ENCODE measurements at regions of chr12 and their contacts with region 1.

Region 1: GRCh38 chr12:53379389-53380103 is 430 bp upstream of the SP1 start:
- DNase-seq: peak; percentile 99
- H3K4me3 Mint-ChIP-seq: no peak overlapping the region
- H3K27ac Mint-ChIP-seq: no peak overlapping the region
- H3K4me1 Mint-ChIP-seq: peaks cover 37% of the 10 kb centered on the region
- H3K27me3 Mint-ChIP-seq: no peaks in the 10 kb centered on the region

Region 2: DNA sequence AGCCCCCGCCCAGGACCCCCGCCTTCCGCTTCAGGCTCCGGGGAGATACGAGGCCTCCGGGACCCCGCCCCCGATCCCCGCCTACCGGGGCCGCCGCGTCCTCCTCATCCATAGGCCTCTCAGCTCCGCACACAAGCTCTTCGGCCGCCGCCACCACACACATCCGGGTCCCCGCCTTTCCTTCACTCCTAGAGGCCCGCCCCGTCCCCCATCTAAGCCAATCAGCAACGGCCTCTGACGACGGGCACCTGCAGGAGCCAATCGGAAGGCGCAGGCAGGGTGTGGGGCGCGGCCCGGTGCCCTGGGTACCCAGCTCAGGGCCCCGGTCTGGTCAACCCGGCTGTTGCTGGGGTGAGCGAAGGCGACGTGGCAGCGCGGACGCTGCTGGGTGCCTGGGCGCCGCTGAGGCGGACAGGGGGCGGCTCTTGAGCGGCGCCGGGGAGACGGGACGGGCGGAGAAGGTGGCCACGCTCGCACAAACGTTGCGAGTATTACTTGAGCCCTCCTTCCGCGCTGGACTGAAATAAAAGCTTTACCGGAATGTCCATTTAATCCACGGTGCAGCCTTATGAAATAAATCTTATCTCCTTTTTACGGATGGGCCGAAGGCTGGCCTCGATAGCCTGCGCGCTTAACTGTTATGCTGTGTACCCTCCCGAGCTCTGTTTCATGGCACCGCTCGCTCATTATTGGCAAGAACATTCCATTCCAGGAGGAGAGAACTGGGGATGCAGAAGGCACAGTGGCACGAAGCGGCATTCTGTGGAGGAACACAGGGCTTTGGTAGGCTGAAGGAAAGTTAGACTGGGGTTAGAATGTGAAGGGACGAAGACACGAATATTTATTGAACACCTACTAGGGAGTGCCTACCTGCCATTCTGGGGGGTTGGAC is 300.1 kb before region 1 on chr12 and contains the start of gene SPRYD3:
- intact Hi-C with region 1: loop called (anchors 1 kb)
- DNase-seq: peak; percentile 97
- H3K4me3 Mint-ChIP-seq: peak within 1 kb of the TSS; percentile 93
- H3K27ac Mint-ChIP-seq: peak within 1 kb of the TSS; percentile 92
- H3K4me1 Mint-ChIP-seq: peaks cover 36% of the 10 kb centered on the region
- H3K27me3 Mint-ChIP-seq: no peaks in the 10 kb centered on the region
- total RNA-seq, gene SPRYD3: 41.2 and 42.6 TPM in 2 replicates

Region 3: DNA sequence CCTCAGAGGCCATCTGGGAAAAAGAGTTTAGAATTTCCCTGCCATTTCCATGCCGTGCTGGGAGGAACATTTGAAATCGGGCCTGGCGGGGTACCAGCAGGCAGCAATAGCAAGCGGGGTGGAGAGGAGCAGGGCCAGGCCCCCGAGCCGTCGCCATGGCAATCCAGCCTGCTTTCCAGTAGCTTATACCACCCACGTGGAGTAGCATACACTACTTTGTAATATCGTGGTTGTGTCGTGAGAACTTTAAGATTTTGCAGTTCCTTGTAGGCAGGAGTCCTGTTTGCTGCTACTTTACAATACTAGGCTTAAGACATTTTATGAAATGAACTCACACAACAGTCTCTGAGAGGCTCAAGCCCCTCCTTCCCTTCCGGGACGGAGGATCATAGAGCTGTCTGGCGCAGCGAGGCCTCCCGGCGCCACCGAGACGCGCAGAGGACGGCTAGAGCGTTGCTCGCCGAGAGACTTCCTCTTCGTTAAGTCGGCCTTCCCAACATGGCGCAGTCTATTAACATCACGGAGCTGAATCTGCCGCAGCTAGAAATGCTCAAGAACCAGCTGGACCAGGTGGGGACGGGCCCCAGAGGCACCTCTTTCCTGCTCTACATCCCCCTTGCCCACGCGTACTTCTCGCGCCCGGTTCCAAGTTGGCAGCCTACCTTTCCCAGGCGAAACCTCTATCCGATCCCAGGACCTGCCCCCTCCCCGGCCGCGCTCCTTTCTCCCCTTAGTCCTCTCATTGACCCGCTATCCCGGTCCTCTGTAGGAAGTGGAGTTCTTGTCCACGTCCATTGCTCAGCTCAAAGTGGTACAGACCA is 84.3 kb before region 1 on chr12 and contains the start of gene PFDN5:
- intact Hi-C with region 1: loop called (anchors 1 kb)
- DNase-seq: peak; percentile 86
- H3K4me3 Mint-ChIP-seq: peak within 1 kb of the TSS; percentile 99
- H3K27ac Mint-ChIP-seq: peak within 1 kb of the TSS; percentile 91
- H3K4me1 Mint-ChIP-seq: peaks cover 50% of the 10 kb centered on the region
- H3K27me3 Mint-ChIP-seq: no peaks in the 10 kb centered on the region
- total RNA-seq, gene PFDN5: 344 and 350 TPM in 2 replicates

Region 4: GRCh38 chr12:53441040-53441833 is 61.7 kb after region 1 on chr12 and contains the start of gene PRR13:
- intact Hi-C with region 1: loop called (anchors 1 kb)
- DNase-seq: peak; percentile 96
- H3K4me3 Mint-ChIP-seq: peak within 1 kb of the TSS; percentile 89
- H3K27ac Mint-ChIP-seq: peak within 1 kb of the TSS; percentile 86
- H3K4me1 Mint-ChIP-seq: peaks cover 35% of the 10 kb centered on the region
- H3K27me3 Mint-ChIP-seq: no peaks in the 10 kb centered on the region
- total RNA-seq, gene PRR13: 206 and 219 TPM in 2 replicates

Region 5: GRCh38 chr12:53500776-53501614 is 121.4 kb after region 1 on chr12 and contains the start of gene TARBP2:
- intact Hi-C with region 1: loop called (anchors 1 kb)
- DNase-seq: peak; percentile 93
- H3K4me3 Mint-ChIP-seq: peak within 1 kb of the TSS; percentile 95
- H3K27ac Mint-ChIP-seq: peak within 1 kb of the TSS; percentile 98
- H3K4me1 Mint-ChIP-seq: peaks cover 53% of the 10 kb centered on the region
- H3K27me3 Mint-ChIP-seq: peaks cover 2% of the 10 kb centered on the region
- total RNA-seq, gene TARBP2: 47.7 and 48.2 TPM in 2 replicates

Region 6: DNA sequence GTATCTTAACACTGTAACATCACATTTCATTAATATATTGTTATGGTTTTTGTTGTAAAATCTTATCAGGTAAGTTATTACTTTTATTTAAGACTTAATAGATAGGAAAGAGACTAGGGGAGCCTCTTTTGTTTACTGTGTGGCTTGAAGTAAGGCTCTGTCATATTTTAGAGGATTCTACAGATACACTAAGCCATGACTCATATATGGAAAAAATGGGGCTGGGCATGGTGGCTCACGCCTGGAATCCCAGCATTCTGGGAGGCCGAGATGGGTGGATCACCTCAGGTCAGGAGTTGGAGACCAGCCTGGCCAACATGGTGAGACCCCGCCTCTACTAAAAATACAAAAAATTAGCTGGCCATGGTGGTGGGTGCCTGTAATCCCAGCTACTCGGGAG is 151.4 kb after region 1 on chr12:
- intact Hi-C with region 1: no loop called
- DNase-seq: no peak
- H3K4me3 Mint-ChIP-seq: no peak overlapping the region
- H3K27ac Mint-ChIP-seq: no peak overlapping the region
- H3K4me1 Mint-ChIP-seq: no peaks in the 10 kb centered on the region
- H3K27me3 Mint-ChIP-seq: no peaks in the 10 kb centered on the region

Region 7: GRCh38 chr12:53675651-53676453 is 296.3 kb after region 1 on chr12 and contains the start of gene ATP5MC2:
- intact Hi-C with region 1: loop called (anchors 2 kb)
- DNase-seq: peak; percentile 95
- H3K4me3 Mint-ChIP-seq: peak within 1 kb of the TSS; percentile 87
- H3K27ac Mint-ChIP-seq: peak within 1 kb of the TSS; percentile 95
- H3K4me1 Mint-ChIP-seq: peaks cover 22% of the 10 kb centered on the region
- H3K27me3 Mint-ChIP-seq: peaks cover 27% of the 10 kb centered on the region
- total RNA-seq, gene ATP5MC2: 363 and 383 TPM in 2 replicates

Measured in activated T-helper 1 cell treated with anti-CD3 and anti-CD28 coated beads, Interleukin-12 subunit alpha, Interleukin-12 subunit beta, Interleukin-2, Interleukin-4 antibody, amounts not matched to agents 30 ng/mL and 10 ng/mL and 1 ng/mL, durations not matched to agents 14 hours and 24 hours and 36 hours (primary cell).